ENCODE measurements at regions of chr20 and their contacts with region 1.

Region 1: DNA sequence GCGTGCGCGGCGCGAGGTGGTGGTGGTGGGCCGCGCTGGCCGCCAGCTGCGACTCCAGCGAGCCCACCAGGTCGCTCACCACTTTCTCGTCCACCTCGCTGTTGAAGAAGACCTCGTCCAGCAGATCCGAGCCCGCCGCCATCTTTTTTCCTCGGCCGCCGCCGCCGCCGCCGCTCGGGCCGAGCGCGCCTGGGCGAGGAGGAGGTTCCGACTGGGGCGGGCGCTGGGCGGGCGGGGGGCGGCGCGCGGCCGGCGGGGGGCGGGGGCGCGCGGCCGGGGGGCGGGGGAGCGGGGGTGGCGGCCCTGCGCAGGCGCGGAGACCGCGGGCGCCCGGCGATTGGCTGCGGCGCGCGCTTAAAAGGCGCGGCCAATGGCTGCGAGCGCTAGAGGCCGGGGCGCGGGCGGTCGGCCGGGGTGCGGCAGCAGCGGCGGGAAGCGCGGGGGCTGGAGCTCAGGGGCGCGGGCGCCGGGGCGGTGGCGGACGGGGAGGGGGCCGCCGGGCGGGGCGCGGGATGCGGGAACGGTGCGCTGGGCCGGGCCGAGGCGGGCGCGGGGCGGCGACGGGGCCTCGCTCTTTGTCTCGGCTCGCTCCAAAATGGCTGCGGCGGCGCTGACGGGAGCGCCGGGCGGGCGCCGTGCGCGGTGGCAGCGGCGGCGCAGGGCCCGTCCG is at the start of gene TAF4:
- DNase-seq: peak; percentile 69 to 85 (median 81)
- H3K4me3 ChIP-seq: peak within 1 kb of the TSS; percentile 54 to 92 (median 79)
- H3K27ac ChIP-seq: peak within 1 kb of the TSS in 1 of 2 experiments; percentile 73
- H3K4me1 ChIP-seq: peaks cover 3 to 38% (median 33%) of the 10 kb centered on the region in 4 experiments
- H3K27me3 ChIP-seq: no peaks in the 10 kb centered on the region

Region 2: DNA sequence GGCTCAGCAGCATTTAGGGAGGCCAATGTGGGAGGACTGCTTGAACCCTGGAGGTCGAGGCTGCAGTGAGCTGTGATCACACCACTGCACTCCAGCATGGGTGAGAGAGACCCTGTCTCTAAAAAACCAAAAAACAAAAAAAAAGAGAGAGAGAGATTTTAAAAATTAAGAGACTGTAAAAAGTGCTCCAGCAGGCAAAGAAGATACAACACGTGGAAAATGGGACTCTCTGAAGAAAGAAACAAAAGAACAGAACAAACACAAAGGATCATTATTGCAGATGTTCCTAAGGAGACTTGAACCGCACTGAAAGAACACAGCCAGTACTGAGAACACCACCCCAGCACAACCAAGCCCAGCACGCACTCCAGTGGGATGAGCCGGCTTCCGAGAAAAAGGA is 74.3 kb before region 1 on chr20:
- CTCF ChIA-PET with region 1: no interaction called
- POLR2A ChIA-PET with region 1: no interaction called
- DNase-seq: peak; percentile 4 to 47 (median 37)
- H3K4me3 ChIP-seq: no peak overlapping the region
- H3K27ac ChIP-seq: no peak overlapping the region
- H3K4me1 ChIP-seq: no peaks in the 10 kb centered on the region
- H3K27me3 ChIP-seq: no peaks in the 10 kb centered on the region

Region 3: DNA sequence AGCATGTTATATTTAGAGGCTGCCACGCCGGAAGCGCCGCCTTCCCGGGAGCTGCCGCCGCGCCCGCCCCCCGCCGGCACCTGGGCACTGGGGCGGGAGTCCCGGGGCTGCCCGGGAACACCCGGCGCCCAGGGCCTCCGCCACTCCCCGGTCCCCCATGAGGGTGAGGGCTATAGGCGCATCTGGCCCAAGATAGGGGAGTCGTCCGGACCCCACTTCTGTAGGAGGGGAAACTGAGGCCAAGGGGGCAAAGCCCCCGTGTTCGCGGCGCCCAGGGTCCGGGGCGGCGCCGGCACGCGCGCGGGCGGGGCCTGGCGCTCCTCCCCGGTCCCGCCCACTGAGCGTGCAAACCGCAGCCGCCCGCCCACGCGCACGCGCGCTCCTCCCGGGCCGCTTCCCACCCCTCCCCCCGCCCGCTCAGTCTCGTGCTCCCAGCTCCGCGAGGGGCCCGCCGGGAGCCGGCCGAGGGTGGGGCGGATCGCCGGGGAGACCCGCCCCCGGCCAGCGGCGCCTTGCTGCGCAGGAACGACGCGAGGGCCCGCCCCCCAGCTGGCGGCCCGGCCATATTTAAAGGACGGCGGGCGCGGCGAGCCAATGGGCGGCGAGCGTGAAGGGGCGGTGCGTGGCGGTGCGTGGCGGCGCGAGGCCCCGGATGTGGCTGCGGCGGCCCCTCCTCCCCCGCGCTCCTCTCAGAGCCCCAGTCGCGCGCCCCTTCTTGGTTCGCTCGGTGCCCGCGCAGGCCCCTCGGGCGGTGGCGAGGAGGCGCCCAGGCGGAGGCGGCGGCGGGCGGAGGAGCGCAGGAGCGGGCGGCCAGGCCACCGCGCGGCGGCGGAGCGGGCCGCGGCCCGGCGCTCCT is 56.2 kb after region 1 on chr20 and contains the start of gene LSM14B:
- CTCF ChIA-PET with region 1: interaction called, 5 read pairs
- POLR2A ChIA-PET with region 1: interaction called, 26 read pairs
- DNase-seq: peak; percentile 97 to 98 (median 98)
- H3K4me3 ChIP-seq: peak within 1 kb of the TSS; percentile 68 to 88 (median 77)
- H3K27ac ChIP-seq: peak within 1 kb of the TSS; percentile 40 to 79
- H3K4me1 ChIP-seq: peaks cover 6 to 57% (median 33%) of the 10 kb centered on the region in 4 experiments
- H3K27me3 ChIP-seq: no peaks in the 10 kb centered on the region

Region 4: DNA sequence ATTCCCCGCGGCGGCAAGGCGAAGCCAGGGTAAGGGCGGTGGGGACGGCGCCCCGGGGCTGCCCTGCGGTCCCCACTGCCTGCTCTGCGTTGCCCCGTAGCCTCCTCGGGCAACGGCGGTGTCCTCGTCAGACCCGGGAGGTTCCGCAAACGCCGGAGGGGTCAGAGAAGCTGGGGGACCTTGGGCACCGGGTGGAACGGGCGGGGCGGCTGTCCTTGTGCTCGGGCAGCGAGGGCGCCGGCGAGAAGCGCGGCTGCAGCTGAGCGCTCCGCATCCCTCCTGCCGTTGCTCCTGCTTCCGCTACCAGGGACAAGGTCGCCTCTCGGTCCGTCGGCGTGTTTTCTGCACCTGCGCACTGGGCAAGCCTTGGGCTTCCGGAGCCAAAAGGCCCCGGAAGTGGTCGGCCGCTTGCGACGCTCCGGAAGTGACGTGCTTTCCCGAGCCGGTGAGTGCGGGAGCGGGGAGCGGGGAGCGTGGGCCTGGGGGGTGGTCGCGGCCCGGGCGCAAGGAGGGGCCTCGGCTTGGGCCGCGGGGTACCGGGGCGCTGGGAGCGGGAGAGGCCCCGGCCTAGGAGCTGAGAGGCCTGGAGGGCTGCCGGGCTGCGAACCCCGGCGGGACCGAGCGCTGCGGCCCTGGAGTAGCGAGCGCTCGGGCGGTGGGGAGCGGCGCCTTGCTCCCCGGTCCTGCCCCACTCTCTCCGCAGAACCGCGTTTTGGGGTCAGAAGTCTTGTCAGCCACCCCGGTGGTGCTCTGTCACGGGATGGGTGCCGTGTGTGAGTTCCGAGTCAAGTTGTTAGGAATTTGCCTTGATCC is 117.0 kb after region 1 on chr20 and contains the start of gene MTG2:
- CTCF ChIA-PET with region 1: no interaction called
- POLR2A ChIA-PET with region 1: no interaction called
- DNase-seq: peak; percentile 95 to 97 (median 97)
- H3K4me3 ChIP-seq: peak within 1 kb of the TSS; percentile 72 to 99 (median 87)
- H3K27ac ChIP-seq: peak within 1 kb of the TSS; percentile 97 to 99
- H3K4me1 ChIP-seq: peaks cover 9 to 22% (median 15%) of the 10 kb centered on the region in 4 experiments
- H3K27me3 ChIP-seq: no peaks in the 10 kb centered on the region

Measured in common myeloid progenitor, CD34-positive (primary cell).